ENCODE measurements at regions of chr1 and their contacts with region 1.

Region 1: GRCh38 chr1:78126506-78126905 is 80.7 kb downstream of the GIPC2 start:
- DNase-seq: no peak
- ATAC-seq: no peak
- H3K4me3 ChIP-seq: no peak overlapping the region
- H3K27ac ChIP-seq: no peak overlapping the region
- H3K4me1 ChIP-seq: no peaks in the 10 kb centered on the region
- H3K27me3 ChIP-seq: no peaks in the 10 kb centered on the region
- CTCF ChIP-seq: no peak
- POLR2A ChIP-seq: no peak

Region 2: DNA sequence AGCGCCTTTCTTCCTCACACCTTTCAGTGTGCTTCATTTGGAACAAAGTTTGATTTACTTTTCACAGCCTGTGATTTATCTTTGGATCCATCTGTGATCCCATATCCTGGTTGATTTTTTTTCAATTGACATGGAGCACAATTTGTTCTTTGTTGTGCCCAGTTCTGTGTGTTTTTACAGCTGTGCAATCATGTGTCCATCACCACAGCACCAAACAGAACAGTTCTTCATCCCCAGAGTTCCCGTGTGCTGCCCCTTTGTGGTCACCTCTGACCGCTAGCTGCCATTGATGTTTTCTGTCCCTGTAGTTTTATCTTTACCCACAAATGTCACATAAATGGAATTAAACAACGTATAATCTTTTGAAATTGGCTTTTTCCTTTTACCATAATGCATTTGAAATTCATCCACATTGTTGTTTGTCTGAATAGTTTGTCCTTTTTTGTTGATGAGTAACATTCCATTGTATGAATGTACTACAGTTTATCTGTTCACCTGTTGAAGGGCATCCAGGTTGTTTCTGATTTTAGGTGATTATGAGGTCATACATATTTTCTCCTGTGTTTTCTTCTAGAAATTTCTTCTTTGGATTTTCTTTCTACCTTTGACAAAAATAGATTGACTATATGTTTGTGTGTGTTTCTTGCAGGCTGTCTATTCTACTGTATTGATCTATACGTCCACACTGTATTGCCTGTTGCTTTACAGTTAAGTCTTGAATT is 329.6 kb before region 1 on chr1:
- intact Hi-C with region 1: loop called in 1 of 10 experiments (anchors 10 kb)
- DNase-seq: no peak
- ATAC-seq: peak in 1 of 4 donors; percentile 22
- H3K4me3 ChIP-seq: no peak overlapping the region
- H3K27ac ChIP-seq: no peak overlapping the region
- H3K4me1 ChIP-seq: no peaks in the 10 kb centered on the region
- H3K27me3 ChIP-seq: no peaks in the 10 kb centered on the region
- CTCF ChIP-seq: no peak
- POLR2A ChIP-seq: no peak

Measured in heart left ventricle (tissue), 16 donors.